ENCODE measurements at regions of chr1 and their contacts with region 1.

Region 1: GRCh38 chr1:201406831-201407406 is 7.8 kb upstream of the LAD1 start:
- DNase-seq: no peak
- H3K4me3 ChIP-seq: no peak overlapping the region
- H3K27ac ChIP-seq: no peak overlapping the region
- H3K4me1 ChIP-seq: no peaks in the 10 kb centered on the region
- H3K27me3 ChIP-seq: no peaks in the 10 kb centered on the region
- CTCF ChIP-seq: no peak
- POLR2A ChIP-seq: no peak

Region 2: GRCh38 chr1:201386208-201386607 is 20.7 kb before region 1 on chr1:
- intact Hi-C with region 1: loop called (anchors 2 kb)
- DNase-seq: no peak
- H3K4me3 ChIP-seq: no peak overlapping the region
- H3K27ac ChIP-seq: no peak overlapping the region
- H3K4me1 ChIP-seq: peaks cover 3 to 11% of the 10 kb centered on the region in 2 donors
- H3K27me3 ChIP-seq: no peaks in the 10 kb centered on the region
- CTCF ChIP-seq: no peak
- POLR2A ChIP-seq: no peak